Caco-2 (cell line): ENCODE measurements at regions of chr2 and their contacts with region 1.

Region 1: GRCh38 chr2:197168705-197169104 is 141.9 kb downstream of the ANKRD44 start:
- DNase-seq: peak; percentile 64 to 67
- H3K4me3 ChIP-seq: no peak overlapping the region
- H3K4me3 Mint-ChIP-seq: no peak overlapping the region
- H3K27ac Mint-ChIP-seq: no peak overlapping the region
- H3K4me1 ChIP-seq: no peaks in the 10 kb centered on the region
- H3K4me1 Mint-ChIP-seq: no peaks in the 10 kb centered on the region
- H3K27me3 ChIP-seq: no peaks in the 10 kb centered on the region
- H3K27me3 Mint-ChIP-seq: peaks cover 11% of the 10 kb centered on the region
- CTCF ChIP-seq: peak; percentile 50 to 72

Region 2: DNA sequence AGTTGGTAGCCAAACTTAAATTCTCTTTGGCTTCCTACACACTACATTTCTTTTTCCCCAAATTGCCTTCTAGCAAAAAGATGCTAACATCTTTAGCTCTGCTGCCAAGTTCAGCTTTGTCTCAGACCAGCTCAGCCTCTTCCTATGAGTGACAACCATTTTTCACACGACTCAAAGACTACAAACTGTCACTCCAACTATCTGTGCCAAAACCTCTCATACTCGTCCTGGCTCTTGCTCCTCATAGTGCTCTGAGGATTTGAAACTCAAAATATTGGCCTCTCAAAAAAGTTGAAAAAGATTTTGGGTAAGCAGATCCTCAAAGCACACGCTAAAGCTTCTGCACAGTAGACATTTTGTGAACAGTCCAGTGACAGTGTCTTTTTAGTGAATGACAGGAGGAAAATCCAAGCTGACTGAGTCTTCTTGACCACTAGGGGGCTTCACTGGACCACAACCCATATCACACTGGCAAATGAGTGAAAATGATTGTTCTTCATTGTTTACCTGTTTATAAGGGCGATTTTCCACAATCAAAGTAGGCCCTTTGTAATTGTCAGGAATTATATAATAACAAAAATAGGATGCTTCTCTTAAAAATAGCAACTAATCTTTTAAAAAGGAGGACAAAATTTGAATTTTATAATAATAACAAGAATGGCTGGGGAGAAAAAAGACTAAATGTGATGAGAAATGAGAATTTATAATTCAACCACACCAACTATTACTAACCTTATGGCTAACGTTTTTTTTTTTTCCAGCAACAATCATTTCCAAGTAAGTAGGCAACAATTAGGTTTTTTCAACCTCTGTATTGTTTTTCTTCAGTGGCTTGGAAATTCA is 156.7 kb before region 1 on chr2:
- CTCF ChIA-PET with region 1: no interaction called
- POLR2A ChIA-PET with region 1: no interaction called
- intact Hi-C with region 1: loop called (anchors 1 kb)
- DNase-seq: peak; percentile 43 to 51
- H3K4me3 ChIP-seq: no peak overlapping the region
- H3K4me3 Mint-ChIP-seq: no peak overlapping the region
- H3K27ac Mint-ChIP-seq: no peak overlapping the region
- H3K4me1 ChIP-seq: no peaks in the 10 kb centered on the region
- H3K4me1 Mint-ChIP-seq: no peaks in the 10 kb centered on the region
- H3K27me3 ChIP-seq: no peaks in the 10 kb centered on the region
- H3K27me3 Mint-ChIP-seq: peaks cover 22% of the 10 kb centered on the region
- CTCF ChIP-seq: peak; percentile 73 to 88

Region 3: DNA sequence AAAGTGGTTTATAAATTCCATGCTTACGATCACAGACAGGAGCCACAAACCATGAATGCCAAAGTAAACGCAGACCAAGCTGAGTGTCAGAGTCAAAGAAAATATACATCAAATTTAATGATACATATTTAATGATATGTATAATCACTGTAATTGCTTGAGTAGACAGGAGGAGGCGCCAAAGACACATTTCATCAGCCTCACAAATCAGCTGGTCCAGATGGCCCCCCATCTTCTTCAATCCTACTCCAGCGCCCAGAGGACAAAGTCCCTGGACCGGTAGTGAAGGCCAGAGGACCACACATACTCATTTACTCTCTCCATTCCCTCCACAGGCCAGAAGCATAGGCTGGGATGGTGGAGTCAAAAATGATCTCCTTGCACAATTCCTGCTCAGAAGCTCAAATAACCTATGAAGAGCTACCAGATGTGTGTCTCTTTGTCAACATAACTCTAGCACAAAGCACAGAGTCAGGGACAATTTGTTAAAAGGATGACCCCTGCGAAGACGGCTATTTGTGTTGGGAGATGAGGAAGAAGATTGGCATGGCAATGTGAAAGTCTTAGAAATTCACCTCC is 92.9 kb before region 1 on chr2:
- CTCF ChIA-PET with region 1: no interaction called
- POLR2A ChIA-PET with region 1: no interaction called
- intact Hi-C with region 1: loop called (anchors 1 kb)
- DNase-seq: no peak
- H3K4me3 ChIP-seq: no peak overlapping the region
- H3K4me3 Mint-ChIP-seq: no peak overlapping the region
- H3K27ac Mint-ChIP-seq: no peak overlapping the region
- H3K4me1 ChIP-seq: no peaks in the 10 kb centered on the region
- H3K4me1 Mint-ChIP-seq: no peaks in the 10 kb centered on the region
- H3K27me3 ChIP-seq: no peaks in the 10 kb centered on the region
- H3K27me3 Mint-ChIP-seq: peaks cover 3% of the 10 kb centered on the region
- CTCF ChIP-seq: peak in 1 of 2 experiments; percentile 64

Region 4: GRCh38 chr2:197286805-197287598 is 118.3 kb after region 1 on chr2:
- CTCF ChIA-PET with region 1: no interaction called
- POLR2A ChIA-PET with region 1: no interaction called
- intact Hi-C with region 1: no loop called
- DNase-seq: no peak
- H3K4me3 ChIP-seq: no peak overlapping the region
- H3K4me3 Mint-ChIP-seq: no peak overlapping the region
- H3K27ac Mint-ChIP-seq: no peak overlapping the region
- H3K4me1 ChIP-seq: no peaks in the 10 kb centered on the region
- H3K4me1 Mint-ChIP-seq: no peaks in the 10 kb centered on the region
- H3K27me3 ChIP-seq: no peaks in the 10 kb centered on the region
- H3K27me3 Mint-ChIP-seq: no peaks in the 10 kb centered on the region
- CTCF ChIP-seq: no peak